Mucosa of descending colon (tissue), 3 donors: ENCODE measurements at regions of chr11 and their contacts with region 1.

Region 1: DNA sequence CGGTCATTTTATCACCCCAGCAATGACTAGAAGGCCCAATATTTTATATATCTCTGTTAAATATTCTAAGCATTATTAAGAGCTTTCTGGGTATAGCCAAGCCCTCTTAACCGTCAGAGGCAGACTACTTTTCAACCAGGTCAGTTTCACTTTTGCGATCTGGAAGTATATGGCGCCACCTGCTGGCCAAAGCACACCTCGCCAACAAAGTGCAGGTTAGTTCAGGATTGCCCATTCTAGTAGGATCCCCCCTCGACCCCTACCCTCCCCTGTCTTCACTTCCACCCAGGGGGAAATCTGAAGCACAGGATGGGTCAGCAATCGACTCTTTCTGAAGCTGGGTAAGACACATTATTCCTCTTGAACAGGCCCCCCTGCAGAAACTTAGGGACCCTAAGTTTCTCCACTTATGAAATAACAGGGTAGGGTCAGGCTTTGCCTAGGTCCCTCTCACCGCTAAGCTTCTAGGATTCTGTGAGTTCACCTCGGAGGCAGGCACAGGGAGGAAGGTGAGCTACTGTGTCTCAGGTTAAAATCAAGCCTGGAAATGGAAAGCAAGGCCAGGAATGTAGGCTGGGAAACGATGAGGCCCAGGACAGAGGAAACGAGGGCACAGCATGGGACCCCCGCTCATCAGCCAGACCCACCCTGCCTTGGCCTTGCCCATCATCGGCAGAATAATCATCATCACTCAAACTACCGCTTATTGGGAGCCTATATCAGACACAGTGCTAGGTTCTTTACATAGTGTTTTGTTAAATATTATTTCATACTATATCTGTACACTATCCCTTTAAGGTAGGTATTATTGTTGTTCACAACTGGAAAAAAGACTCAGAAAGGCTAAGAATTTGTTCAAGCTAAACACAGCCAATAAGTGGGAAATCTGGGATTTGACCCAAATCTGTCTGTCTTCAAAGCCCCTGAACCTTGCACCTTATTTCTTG is 35.6 kb downstream of the KCNJ1 start:
- DNase-seq: peak; percentile 75 to 89 (median 85)
- ATAC-seq: peak; percentile 92
- H3K4me3 ChIP-seq: no peak overlapping the region
- H3K4me1 ChIP-seq: no peaks in the 10 kb centered on the region
- CTCF ChIP-seq: peak; percentile 73

Region 2: DNA sequence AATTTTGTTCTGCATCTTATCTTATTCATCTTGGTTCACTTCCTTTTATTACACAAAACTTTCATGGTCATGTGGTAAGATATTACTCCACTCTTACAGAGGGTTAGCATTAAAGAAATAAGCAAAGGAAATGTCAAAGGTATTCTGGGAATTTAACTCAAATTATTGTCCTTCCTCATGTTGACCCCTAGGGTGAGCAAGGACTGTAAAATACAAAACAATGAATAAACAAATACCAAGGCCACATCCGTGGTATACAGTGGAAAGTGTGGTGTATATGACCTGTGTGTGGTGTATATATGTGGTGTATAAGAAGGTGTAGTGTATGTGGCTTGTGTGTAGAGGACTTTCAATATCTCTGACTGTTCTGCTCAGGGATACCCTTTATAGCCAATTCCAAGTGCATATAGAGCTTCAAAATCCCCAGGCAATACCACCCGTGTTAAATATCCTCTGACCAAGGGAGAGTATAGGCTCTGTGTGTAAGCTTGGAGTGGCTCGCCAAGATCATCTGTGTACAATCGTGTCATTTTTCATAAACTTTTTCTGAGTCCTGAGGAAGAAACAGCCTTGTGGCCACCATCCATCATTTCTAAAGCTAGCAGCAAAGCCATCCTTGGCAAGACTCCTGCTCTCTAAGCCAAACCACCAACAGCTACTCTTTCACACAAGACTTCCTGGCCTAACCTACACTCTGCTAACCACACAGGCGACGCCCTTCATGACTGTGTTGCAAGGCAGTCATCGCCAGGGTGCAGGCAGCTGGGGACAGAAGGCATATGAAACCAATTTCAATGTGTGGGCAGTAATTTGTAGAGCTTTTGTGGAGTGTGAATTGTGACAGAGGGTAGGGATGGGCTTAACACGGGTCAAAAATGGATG is 792.1 kb before region 1 on chr11:
- intact Hi-C with region 1: loop called in 1 of 2 experiments (anchors 5 kb)
- DNase-seq: peak; percentile 53 to 80 (median 53)
- ATAC-seq: peak; percentile 92
- H3K4me3 ChIP-seq: no peak overlapping the region
- H3K4me1 ChIP-seq: no peaks in the 10 kb centered on the region
- CTCF ChIP-seq: no peak

Region 3: GRCh38 chr11:128157423-128158298 is 673.8 kb before region 1 on chr11:
- intact Hi-C with region 1: loop called in 1 of 2 experiments (anchors 5 kb)
- DNase-seq: peak in 1 of 3 donors; percentile 81
- ATAC-seq: peak; percentile 92
- H3K4me3 ChIP-seq: no peak overlapping the region
- H3K4me1 ChIP-seq: no peaks in the 10 kb centered on the region
- CTCF ChIP-seq: peak; percentile 38

Region 4: GRCh38 chr11:128172046-128172878 is 659.2 kb before region 1 on chr11:
- intact Hi-C with region 1: loop called (anchors 5 kb)
- DNase-seq: peak; percentile 53 to 96 (median 80)
- ATAC-seq: peak; percentile 81
- H3K4me3 ChIP-seq: no peak overlapping the region
- H3K4me1 ChIP-seq: no peaks in the 10 kb centered on the region
- CTCF ChIP-seq: peak; percentile 42